ENCODE measurements at regions of chr15 and their contacts with region 1.

Region 1: GRCh38 chr15:78241007-78241406 is 6.6 kb upstream of the ACSBG1 start:
- H3K4me3 ChIP-seq: no peak overlapping the region
- H3K27ac ChIP-seq: no peak overlapping the region
- H3K4me1 ChIP-seq: no peaks in the 10 kb centered on the region
- CTCF ChIP-seq: peak; percentile 86

Region 2: GRCh38 chr15:77959432-77959879 is 281.6 kb before region 1 on chr15:
- CTCF ChIA-PET with region 1: interaction called, 24 read pairs
- POLR2A ChIA-PET with region 1: no interaction called
- H3K4me3 ChIP-seq: no peak overlapping the region
- H3K27ac ChIP-seq: no peak overlapping the region
- H3K4me1 ChIP-seq: no peaks in the 10 kb centered on the region
- CTCF ChIP-seq: peak; percentile 81

Region 3: DNA sequence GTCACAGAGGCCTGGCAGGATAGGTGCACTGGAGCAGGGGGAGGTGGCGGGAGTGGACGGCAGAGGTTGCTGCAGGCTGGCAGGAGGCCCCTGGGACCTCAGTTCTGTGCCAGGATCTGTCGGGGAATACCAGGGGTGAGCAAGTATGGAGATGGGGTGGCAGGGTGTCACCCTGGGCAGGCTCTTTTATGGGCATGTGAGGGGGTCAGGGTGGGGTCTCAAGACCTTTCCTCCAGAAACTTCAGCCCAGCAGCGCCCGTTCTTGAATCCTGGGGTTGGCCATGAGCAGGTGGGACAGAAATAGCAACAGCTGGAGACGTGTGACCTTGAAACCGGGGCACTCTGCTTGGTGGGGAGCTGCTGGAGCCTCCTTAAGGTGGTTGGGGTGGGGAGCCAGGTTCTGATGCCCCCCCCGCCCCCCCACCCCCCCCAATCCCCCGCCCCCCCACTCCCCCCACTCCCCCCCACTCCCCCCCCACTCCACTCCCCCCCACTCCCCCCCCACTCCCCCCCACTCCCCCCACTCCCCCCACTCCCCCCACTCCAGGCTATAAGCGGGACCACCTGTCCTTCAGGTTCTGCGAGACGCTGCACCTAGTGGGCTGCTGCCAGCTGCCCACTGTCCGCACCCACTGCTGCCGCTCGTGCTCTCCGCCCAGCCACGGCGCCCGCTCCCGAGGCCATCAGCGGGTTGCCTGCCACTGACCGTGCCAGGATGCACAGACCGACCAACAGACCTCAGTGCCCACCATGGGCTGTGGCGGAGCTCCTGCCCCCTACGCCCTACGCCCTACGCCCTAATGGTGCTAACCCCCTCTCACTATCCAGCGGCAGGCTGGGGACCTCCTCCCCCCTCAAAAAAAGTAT is 248.4 kb before region 1 on chr15:
- CTCF ChIA-PET with region 1: no interaction called
- POLR2A ChIA-PET with region 1: no interaction called
- H3K4me3 ChIP-seq: no peak overlapping the region
- H3K27ac ChIP-seq: no peak overlapping the region
- H3K4me1 ChIP-seq: no peaks in the 10 kb centered on the region
- CTCF ChIP-seq: no peak

Region 4: GRCh38 chr15:78012643-78013077 is 228.3 kb before region 1 on chr15:
- CTCF ChIA-PET with region 1: no interaction called
- POLR2A ChIA-PET with region 1: no interaction called
- H3K4me3 ChIP-seq: no peak overlapping the region
- H3K27ac ChIP-seq: no peak overlapping the region
- H3K4me1 ChIP-seq: no peaks in the 10 kb centered on the region
- CTCF ChIP-seq: no peak

Region 5: DNA sequence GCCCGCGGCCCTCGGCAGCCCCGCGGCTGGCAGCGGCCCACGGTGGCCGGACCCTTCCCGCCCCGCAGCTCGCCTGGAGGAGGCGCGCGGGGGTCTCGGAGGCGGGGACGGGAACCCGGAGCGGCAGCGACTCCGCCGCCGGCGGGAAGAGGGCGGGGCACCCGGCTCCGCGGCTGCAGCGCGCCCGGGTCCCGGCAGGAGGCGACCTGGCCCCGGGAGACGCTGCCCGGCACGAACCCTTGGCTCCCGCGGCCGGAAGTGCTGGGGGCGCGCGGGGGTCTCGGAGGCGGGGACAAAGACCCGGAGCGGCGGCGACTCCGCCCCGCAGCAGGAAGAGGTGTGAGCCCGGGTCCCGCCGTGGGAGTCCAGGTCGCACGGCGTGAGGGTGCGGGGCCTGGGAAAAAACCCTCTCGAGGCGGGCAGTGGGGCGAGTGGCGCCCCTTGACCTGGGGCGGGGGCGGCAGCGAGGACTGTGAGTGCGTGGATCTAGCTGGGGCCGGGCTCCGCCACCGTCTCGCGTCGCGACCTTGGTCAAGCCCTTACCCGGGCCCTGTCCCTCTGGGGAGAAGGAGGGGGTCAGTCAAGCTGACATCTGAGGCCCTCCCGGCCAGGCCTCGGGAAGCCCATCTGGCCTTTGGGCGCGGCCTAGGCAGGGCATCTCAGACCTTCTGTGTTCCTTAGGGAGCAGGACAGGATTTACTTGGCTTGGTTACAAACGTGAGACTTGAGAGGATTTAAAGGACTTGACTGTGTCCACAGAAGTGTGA is 109.5 kb before region 1 on chr15 and contains the start of gene CIB2:
- CTCF ChIA-PET with region 1: interaction called, 22 read pairs
- POLR2A ChIA-PET with region 1: interaction called, 3 read pairs
- H3K4me3 ChIP-seq: peak within 1 kb of the TSS; percentile 74
- H3K27ac ChIP-seq: peak within 1 kb of the TSS; percentile 85
- H3K4me1 ChIP-seq: peaks cover 2% of the 10 kb centered on the region; the same call in 1 of the 2 replicates
- CTCF ChIP-seq: peak; percentile 30; the same call in 1 of the 2 replicates

Region 6: GRCh38 chr15:78182821-78183220 is 58.2 kb before region 1 on chr15:
- CTCF ChIA-PET with region 1: interaction called, 234 read pairs
- POLR2A ChIA-PET with region 1: no interaction called
- H3K4me3 ChIP-seq: no peak overlapping the region
- H3K27ac ChIP-seq: no peak overlapping the region
- H3K4me1 ChIP-seq: no peaks in the 10 kb centered on the region
- CTCF ChIP-seq: no peak

Region 7: DNA sequence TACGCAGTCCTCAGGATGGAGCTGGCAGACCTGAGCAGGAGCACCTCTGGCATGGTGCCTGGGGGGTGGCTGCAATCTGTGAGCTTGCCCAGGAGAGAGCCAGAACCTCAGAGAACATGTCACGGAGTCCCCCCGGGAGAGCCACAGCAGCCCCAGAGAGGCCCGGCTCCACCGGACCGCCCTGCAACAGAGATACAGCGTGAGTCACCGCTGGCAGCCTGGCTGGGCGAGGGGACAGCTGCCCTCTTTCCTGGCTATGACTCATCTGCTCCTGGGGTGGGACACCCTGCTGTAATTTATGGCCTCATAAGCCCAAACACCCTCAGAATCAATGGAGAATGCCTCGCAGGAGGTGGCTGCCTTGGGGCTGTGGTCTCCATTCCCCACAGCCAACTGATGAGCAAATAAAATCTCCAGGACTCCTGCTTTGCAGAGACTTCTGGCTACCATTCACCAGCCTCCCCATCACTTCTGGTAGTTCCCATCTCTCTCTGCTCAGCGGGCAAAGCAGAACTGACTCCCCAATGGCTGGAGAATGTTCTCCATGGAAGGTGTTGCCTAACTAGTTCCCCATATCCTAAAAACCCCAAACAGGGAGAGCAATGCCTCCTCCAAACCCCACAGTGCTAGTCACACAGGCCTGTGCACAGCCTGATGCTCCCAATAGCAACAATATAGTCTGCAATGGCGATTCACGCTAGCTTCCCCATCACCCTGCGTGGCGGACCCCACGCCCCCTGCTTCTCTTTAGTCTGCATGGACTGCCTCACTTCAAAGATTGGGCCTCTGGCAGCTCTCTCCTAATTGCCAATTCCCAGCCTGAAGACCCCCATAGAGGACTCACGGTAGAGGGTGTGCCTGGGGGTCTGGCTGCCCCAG is 28.2 kb before region 1 on chr15:
- CTCF ChIA-PET with region 1: interaction called, 56 read pairs
- POLR2A ChIA-PET with region 1: no interaction called
- H3K4me3 ChIP-seq: no peak overlapping the region
- H3K27ac ChIP-seq: peak overlapping the region; percentile 25; the same call in 1 of the 2 replicates
- H3K4me1 ChIP-seq: peaks cover 12% of the 10 kb centered on the region
- CTCF ChIP-seq: no peak

Region 8: DNA sequence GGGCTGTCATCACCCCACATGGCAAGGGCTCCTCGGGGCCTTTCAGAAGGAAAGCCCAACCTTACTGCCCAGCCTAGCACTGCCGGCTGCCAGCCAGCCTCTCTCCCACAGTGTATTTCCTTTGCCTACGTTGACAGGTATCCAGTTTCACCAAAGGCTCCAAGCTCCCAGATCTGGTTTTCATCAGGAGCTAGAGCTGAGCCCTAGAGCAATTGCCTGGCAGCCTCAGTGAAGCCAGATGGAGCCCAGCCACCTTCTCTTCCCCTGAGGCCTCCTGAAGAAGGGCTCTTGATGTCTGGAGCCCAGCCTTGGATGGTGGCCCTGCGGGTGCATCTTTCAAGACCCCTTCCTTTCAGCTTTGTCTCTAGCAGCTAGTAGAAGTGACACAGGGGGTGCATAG is 119.4 kb after region 1 on chr15:
- CTCF ChIA-PET with region 1: no interaction called
- POLR2A ChIA-PET with region 1: no interaction called
- H3K4me3 ChIP-seq: no peak overlapping the region
- H3K27ac ChIP-seq: no peak overlapping the region
- H3K4me1 ChIP-seq: no peaks in the 10 kb centered on the region
- CTCF ChIP-seq: no peak

Region 9: GRCh38 chr15:78681281-78682003 is 440.4 kb after region 1 on chr15:
- CTCF ChIA-PET with region 1: no interaction called
- POLR2A ChIA-PET with region 1: no interaction called
- H3K4me3 ChIP-seq: no peak overlapping the region
- H3K27ac ChIP-seq: no peak overlapping the region
- H3K4me1 ChIP-seq: 0 out of 2 replicates have a peak, but pooled peaks cover 5% of the 10 kb centered on the region
- CTCF ChIP-seq: no peak